PC-9 (cell line): ENCODE measurements at regions of chr17 and their contacts with region 1.

Region 1: DNA sequence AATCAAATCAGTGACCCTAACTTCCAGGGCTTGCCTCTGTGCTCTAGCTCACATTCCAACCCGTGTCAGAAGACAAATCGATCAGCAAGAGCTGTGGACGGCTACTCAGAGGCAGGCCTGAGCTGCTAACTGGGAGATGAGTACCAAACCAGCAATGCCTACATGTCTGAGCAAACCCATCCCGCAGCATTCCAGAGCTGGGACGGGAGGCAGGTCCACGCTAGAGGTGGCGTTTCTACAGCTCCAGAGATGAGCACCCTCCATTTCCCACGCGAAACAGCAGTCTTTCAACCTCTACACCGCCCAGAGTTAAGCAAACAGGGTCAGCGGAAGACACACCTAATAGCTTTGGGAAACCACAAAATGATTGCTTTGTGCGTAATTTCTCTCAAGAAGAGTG is 6.5 kb downstream of the NXN start:
- DNase-seq: peak; percentile 83 to 97
- H3K4me3 ChIP-seq: peak overlapping the region; percentile 36; the same call in 1 of the 2 replicates
- H3K27ac ChIP-seq: peak overlapping the region; percentile 96
- H3K4me1 ChIP-seq: peaks cover 54% of the 10 kb centered on the region
- H3K27me3 ChIP-seq: no peaks in the 10 kb centered on the region
- CTCF ChIP-seq: no peak

Region 2: GRCh38 chr17:835263-835662 is 137.8 kb before region 1 on chr17:
- CTCF ChIA-PET with region 1: no interaction called
- POLR2A ChIA-PET with region 1: no interaction called
- intact Hi-C with region 1: no loop called
- DNase-seq: peak in 1 of 2 experiments; percentile 10
- H3K4me3 ChIP-seq: no peak overlapping the region
- H3K27ac ChIP-seq: no peak overlapping the region
- H3K4me1 ChIP-seq: no peaks in the 10 kb centered on the region
- H3K27me3 ChIP-seq: no peaks in the 10 kb centered on the region
- CTCF ChIP-seq: no peak

Region 3: DNA sequence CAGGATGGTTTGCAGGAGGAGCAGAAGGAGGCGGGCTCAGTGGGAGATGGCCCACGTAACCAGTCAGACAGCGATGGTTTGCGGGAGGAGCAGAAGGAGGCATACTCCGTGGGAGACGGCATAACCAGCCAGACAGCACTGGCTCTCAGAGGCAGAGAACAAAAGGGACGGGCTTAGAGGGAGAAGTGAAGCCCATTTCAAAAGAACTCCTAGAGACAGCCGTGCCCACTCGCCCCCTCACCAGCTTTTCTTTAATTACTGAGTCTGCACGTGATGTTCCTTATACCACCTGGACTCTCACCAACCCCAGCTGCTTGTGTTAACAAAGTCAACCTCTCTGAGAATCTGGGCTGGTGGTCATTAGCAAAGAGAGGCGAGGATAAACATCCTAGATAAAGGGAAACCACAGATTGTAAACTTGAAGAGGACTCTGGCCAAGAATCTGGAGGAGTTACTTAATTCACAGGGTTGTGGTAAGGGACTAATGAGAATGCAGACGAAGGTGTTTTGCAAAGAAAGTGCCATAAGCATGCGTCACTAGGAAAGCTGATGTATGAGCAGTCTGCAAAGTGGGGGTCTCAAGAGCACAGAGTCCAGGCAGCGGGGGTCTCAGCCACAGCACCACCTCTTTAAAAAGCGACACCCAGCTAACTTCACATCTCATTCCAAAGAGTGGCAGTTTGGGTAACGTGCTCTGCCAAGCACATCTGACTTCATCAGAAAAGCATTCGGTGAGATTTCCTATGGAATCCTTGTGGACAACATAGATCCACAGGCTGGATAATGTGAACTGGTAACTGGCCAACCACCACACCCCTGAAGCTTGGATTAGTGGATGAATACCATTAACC is 45.2 kb before region 1 on chr17:
- CTCF ChIA-PET with region 1: interaction called, 3 read pairs
- POLR2A ChIA-PET with region 1: interaction called, 3 read pairs
- intact Hi-C with region 1: loop called (anchors 1 kb)
- DNase-seq: peak; percentile 83 to 97
- H3K4me3 ChIP-seq: peak overlapping the region; percentile 29; the same call in 1 of the 2 replicates
- H3K27ac ChIP-seq: peak overlapping the region; percentile 84
- H3K4me1 ChIP-seq: peaks cover 60% of the 10 kb centered on the region
- H3K27me3 ChIP-seq: no peaks in the 10 kb centered on the region
- CTCF ChIP-seq: no peak

Region 4: GRCh38 chr17:933312-934083 is 39.6 kb before region 1 on chr17:
- CTCF ChIA-PET with region 1: no interaction called
- POLR2A ChIA-PET with region 1: interaction called, 3 read pairs
- intact Hi-C with region 1: loop called (anchors 1 kb)
- DNase-seq: peak; percentile 91 to 99
- H3K4me3 ChIP-seq: peak overlapping the region; percentile 38; the same call in 1 of the 2 replicates
- H3K27ac ChIP-seq: peak overlapping the region; percentile 91
- H3K4me1 ChIP-seq: peaks cover 49% of the 10 kb centered on the region
- H3K27me3 ChIP-seq: no peaks in the 10 kb centered on the region
- CTCF ChIP-seq: no peak

Region 5: GRCh38 chr17:956905-957304 is 16.1 kb before region 1 on chr17:
- CTCF ChIA-PET with region 1: interaction called, 13 read pairs
- POLR2A ChIA-PET with region 1: interaction called, 12 read pairs
- intact Hi-C with region 1: loop called (anchors 2 kb)
- DNase-seq: peak; percentile 73 to 74
- H3K4me3 ChIP-seq: no peak overlapping the region
- H3K27ac ChIP-seq: no peak overlapping the region
- H3K4me1 ChIP-seq: peaks cover 15% of the 10 kb centered on the region
- H3K27me3 ChIP-seq: no peaks in the 10 kb centered on the region
- CTCF ChIP-seq: no peak